ENCODE measurements at regions of chr5 and their contacts with region 1.

Region 1: GRCh38 chr5:58460732-58461286 is 923 bp upstream of the PLK2 start:
- DNase-seq: peak; percentile 19 to 33 (median 23)
- ATAC-seq: peak; percentile 82
- H3K4me3 ChIP-seq: no peak overlapping the region
- H3K27ac ChIP-seq: no peak overlapping the region
- H3K4me1 ChIP-seq: peaks cover 0 to 12% of the 10 kb centered on the region in 2 experiments; a peak in 1 of 5 replicates
- H3K27me3 ChIP-seq: no peaks in the 10 kb centered on the region
- CTCF ChIP-seq: peak; percentile 56 to 62 (median 60)
- EP300 ChIP-seq: no peak
- POLR2A ChIP-seq: no peak
- RAD21 ChIP-seq: peak; percentile 52 to 79

Region 2: DNA sequence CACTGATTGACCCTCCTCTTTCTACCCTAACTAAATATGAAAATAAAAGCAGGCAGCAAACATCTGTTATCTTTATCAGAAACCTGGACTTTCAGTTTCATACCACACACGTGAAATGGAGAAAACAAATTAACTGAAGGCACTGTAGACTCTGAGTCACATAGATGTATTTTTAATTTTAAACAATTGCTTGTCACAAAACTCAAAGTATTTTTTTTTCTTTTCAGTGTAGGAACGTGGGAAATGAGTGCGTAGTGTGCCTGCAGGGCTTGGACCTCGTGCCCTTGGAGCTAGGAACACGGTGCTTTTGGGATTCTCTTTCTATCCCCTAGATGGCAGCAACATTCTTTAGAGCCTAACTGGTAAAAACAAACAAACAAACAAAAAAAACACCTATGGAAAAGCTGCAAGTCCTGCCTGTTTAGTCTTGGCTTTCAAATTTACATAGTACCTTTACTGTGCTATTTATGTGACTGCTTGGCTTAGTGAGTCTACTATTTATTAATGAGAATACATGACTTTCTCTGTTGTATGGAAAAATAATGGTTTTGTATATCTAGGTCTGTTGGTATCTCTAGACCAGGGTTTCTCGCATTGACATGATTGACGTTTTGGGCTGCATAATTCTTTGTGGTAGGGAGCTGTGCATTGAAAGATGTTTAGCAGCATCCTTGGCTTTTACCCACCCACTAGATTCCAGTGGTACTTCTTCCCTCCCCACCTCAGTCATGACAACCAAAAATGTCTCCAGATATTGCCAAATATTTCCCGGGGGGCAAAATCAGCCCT is 961.4 kb before region 1 on chr5:
- CTCF ChIA-PET with region 1: interaction called, 3 read pairs
- POLR2A ChIA-PET with region 1: no interaction called
- in situ Hi-C with region 1: loop called (anchors 25 kb)
- intact Hi-C with region 1: loop called (anchors 2 kb)
- DNase-seq: peak; percentile 39 to 47 (median 44)
- ATAC-seq: peak; percentile 79
- H3K4me3 ChIP-seq: no peak overlapping the region
- H3K27ac ChIP-seq: no peak overlapping the region
- H3K4me1 ChIP-seq: peaks cover 0 to 8% of the 10 kb centered on the region in 2 experiments; a peak in 4 of 5 replicates
- H3K27me3 ChIP-seq: no peaks in the 10 kb centered on the region
- CTCF ChIP-seq: peak; percentile 44 to 72 (median 66)
- EP300 ChIP-seq: no peak
- POLR2A ChIP-seq: no peak
- RAD21 ChIP-seq: peak; percentile 72 to 75

Region 3: DNA sequence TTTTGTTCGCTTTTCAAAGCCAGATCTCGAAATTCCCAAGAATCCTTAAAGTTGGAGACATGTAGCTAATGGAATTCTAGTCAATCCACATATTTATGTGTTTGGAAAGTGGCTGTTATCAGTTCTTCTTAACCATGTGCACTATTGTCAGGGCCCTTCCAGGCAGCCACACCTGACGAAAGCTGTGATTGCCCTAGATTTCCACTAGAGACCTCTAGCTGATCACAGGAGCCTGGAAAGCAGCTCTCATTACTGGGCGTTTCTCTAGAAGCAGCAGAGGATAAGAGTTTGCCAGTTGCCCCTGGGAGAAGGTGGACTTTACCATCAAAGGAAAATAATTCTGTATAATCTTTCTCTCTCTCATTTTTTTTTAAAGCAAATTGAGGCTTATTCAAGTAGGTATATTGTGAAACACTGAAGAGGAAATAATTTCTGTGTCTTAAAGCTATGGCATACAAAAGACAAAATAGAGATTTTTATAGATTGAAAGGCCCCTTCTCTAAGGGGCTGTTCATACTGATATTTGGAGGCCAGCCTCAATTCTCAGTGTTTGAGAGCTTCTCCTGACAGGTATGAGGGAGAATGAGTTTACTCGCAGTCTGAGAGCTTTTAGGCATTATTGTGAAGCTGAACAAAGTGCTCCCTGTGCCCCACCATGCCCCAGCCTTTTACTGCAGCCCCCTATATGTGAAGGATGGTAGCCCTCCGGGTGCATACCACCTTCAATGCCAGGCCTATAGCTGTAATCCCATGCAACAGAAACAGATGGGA is 572.8 kb before region 1 on chr5:
- CTCF ChIA-PET with region 1: interaction called, 5 read pairs
- POLR2A ChIA-PET with region 1: no interaction called
- in situ Hi-C with region 1: no loop called
- intact Hi-C with region 1: loop called (anchors 1 kb)
- DNase-seq: peak in 2 of 4 experiments; percentile 29 to 40
- ATAC-seq: peak; percentile 89
- H3K4me3 ChIP-seq: no peak overlapping the region
- H3K27ac ChIP-seq: no peak overlapping the region
- H3K4me1 ChIP-seq: no peaks in the 10 kb centered on the region
- H3K27me3 ChIP-seq: no peaks in the 10 kb centered on the region
- CTCF ChIP-seq: peak; percentile 43 to 62 (median 47); a peak in 5 of 6 replicates
- EP300 ChIP-seq: no peak
- POLR2A ChIP-seq: no peak
- RAD21 ChIP-seq: peak; percentile 52 to 82

Region 4: GRCh38 chr5:58143209-58143608 is 317.6 kb before region 1 on chr5:
- CTCF ChIA-PET with region 1: no interaction called
- POLR2A ChIA-PET with region 1: no interaction called
- in situ Hi-C with region 1: no loop called
- intact Hi-C with region 1: no loop called
- DNase-seq: no peak
- ATAC-seq: no peak
- H3K4me3 ChIP-seq: no peak overlapping the region
- H3K27ac ChIP-seq: no peak overlapping the region
- H3K4me1 ChIP-seq: no peaks in the 10 kb centered on the region
- H3K27me3 ChIP-seq: no peaks in the 10 kb centered on the region
- CTCF ChIP-seq: no peak
- EP300 ChIP-seq: no peak
- POLR2A ChIP-seq: no peak
- RAD21 ChIP-seq: no peak

Region 5: GRCh38 chr5:58348996-58349961 is 111.5 kb before region 1 on chr5:
- CTCF ChIA-PET with region 1: no interaction called
- POLR2A ChIA-PET with region 1: no interaction called
- in situ Hi-C with region 1: no loop called
- intact Hi-C with region 1: no loop called
- DNase-seq: no peak
- ATAC-seq: no peak
- H3K4me3 ChIP-seq: no peak overlapping the region
- H3K27ac ChIP-seq: no peak overlapping the region
- H3K4me1 ChIP-seq: no peaks in the 10 kb centered on the region
- H3K27me3 ChIP-seq: no peaks in the 10 kb centered on the region
- CTCF ChIP-seq: no peak
- EP300 ChIP-seq: no peak
- POLR2A ChIP-seq: no peak
- RAD21 ChIP-seq: no peak

Region 6: GRCh38 chr5:58431832-58432231 is 29.0 kb before region 1 on chr5:
- CTCF ChIA-PET with region 1: no interaction called
- POLR2A ChIA-PET with region 1: no interaction called
- in situ Hi-C with region 1: no loop called
- intact Hi-C with region 1: no loop called
- DNase-seq: no peak
- ATAC-seq: no peak
- H3K4me3 ChIP-seq: no peak overlapping the region
- H3K27ac ChIP-seq: no peak overlapping the region
- H3K4me1 ChIP-seq: no peaks in the 10 kb centered on the region
- H3K27me3 ChIP-seq: no peaks in the 10 kb centered on the region
- CTCF ChIP-seq: no peak
- EP300 ChIP-seq: no peak
- POLR2A ChIP-seq: no peak
- RAD21 ChIP-seq: no peak